IMR-90 (cell line): ENCODE measurements at regions of chr6 and their contacts with region 1.

Region 1: DNA sequence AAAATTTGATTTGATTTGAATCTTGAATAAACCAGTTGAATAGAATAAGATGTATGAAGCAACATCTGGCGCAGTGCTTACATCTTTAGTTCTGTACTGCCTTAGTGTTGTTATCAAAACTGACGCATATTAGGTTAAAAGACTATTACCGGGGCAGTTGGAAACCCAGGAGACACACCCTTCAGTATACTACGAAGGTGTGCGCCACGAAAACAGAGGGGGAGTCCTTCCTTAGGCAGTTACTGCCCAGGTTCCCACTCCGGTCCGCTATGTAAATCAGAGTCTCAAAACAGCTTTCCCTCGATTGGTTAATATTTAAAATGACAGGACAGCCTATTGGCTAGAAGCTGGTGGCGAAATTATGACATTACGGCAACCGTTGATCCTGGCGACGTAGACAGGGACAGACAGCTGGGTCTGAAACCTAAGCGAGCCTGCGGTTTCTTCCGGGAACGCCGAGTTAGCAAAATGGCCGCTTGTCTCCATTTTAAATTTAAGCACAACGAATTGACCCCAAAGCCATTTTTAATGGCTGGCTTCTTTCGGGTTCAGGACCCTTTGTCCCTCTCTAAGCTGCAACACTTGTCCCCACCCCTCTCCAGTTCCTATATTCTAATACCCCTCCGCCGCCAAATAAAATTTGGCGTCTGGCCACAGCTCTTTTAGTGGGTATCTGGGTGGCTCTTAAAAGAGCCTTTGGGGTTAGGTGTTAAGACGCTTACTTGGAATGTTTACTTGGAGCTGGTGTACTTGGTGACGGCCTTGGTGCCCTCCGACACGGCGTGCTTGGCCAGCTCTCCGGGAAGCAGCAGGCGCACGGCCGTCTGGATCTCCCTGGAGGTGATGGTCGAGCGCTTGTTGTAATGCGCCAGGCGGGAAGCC is 35.8 kb downstream of the HFE start:
- DNase-seq: peak; percentile 99
- ATAC-seq: peak; percentile 47
- H3K4me3 ChIP-seq: peak overlapping the region; percentile 54
- H3K27ac ChIP-seq: peak overlapping the region; percentile 89
- H3K4me1 ChIP-seq: peaks cover 5% of the 10 kb centered on the region
- H3K27me3 ChIP-seq: no peaks in the 10 kb centered on the region
- CTCF ChIP-seq: no peak
- POLR2A ChIP-seq: no peak; the same call in 1 of the 2 replicates
- RAD21 ChIP-seq: no peak

Region 2: DNA sequence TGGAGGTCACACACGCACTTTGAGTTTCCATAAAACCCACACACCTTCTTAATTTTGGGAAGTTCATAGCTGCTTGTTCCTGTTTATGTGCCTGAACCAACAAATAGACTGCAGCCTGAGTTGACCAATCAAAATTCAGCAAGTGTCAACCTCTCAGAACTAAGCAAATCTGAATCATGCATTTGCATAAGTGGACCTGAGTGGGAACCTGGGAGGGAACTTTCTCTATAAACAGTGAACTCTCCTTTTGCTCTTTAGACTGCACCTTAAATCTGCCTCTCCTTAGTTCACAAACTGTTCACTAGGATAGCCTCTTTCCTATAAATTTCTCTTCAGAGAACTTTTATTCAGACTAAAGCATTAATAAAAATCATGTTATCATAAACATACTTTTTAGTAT is 329.1 kb before region 1 on chr6:
- CTCF ChIA-PET with region 1: no interaction called
- POLR2A ChIA-PET with region 1: no interaction called
- dilution Hi-C with region 1: no loop called
- in situ Hi-C with region 1: no loop called
- intact Hi-C with region 1: no loop called
- DNase-seq: no peak
- ATAC-seq: no peak
- H3K4me3 ChIP-seq: no peak overlapping the region
- H3K27ac ChIP-seq: no peak overlapping the region
- H3K4me1 ChIP-seq: no peaks in the 10 kb centered on the region
- H3K27me3 ChIP-seq: no peaks in the 10 kb centered on the region
- CTCF ChIP-seq: no peak
- POLR2A ChIP-seq: no peak
- RAD21 ChIP-seq: no peak

Region 3: DNA sequence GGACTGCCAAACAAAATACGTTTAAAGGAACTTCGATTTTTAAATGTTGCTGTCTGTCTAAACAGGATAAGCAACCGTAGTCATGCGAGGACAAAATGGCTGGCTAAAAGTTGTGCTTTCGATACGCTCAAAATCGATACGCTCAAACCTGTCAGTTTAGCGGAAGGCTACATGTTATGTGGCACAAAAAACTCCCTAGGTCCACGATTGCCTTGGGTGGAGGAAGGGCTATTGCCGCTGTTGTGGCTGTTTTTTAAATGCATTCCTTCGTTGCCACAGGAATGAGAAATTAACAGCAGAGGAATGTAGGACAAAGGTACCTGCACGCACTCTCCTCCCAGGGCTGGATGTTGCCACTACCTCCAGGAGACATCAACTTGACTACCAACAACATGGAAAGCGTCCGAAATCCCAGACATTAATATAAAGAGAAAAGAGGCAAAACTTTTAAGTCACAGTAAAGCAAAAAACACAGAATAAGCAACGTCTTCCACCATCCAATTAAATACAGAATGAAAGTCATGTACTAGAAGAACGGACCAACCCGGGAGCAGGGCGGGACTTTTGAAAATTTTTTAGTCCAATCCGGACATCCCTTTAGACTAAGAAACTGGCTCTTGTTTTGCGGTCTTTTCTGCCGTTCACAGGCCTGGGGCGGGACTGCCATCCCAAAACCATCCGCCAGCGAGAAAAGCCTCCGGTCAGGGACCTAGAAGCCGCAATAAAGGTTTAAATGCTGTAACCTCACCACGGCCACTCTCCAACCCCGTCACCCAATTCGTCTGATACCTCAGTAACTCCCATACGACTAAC is 68.0 kb before region 1 on chr6:
- CTCF ChIA-PET with region 1: interaction called, 3 read pairs
- POLR2A ChIA-PET with region 1: no interaction called
- dilution Hi-C with region 1: no loop called
- in situ Hi-C with region 1: no loop called
- intact Hi-C with region 1: loop called (anchors 2 kb)
- DNase-seq: peak; percentile 96
- ATAC-seq: peak; percentile 77
- H3K4me3 ChIP-seq: peak overlapping the region; percentile 77
- H3K27ac ChIP-seq: peak overlapping the region; percentile 86
- H3K4me1 ChIP-seq: peaks cover 2% of the 10 kb centered on the region; the same call in 1 of the 2 replicates
- H3K27me3 ChIP-seq: no peaks in the 10 kb centered on the region
- CTCF ChIP-seq: peak; percentile 28; the same call in 1 of the 2 replicates
- POLR2A ChIP-seq: peak; percentile 92
- RAD21 ChIP-seq: peak; percentile 26; the same call in 1 of the 2 replicates

Region 4: DNA sequence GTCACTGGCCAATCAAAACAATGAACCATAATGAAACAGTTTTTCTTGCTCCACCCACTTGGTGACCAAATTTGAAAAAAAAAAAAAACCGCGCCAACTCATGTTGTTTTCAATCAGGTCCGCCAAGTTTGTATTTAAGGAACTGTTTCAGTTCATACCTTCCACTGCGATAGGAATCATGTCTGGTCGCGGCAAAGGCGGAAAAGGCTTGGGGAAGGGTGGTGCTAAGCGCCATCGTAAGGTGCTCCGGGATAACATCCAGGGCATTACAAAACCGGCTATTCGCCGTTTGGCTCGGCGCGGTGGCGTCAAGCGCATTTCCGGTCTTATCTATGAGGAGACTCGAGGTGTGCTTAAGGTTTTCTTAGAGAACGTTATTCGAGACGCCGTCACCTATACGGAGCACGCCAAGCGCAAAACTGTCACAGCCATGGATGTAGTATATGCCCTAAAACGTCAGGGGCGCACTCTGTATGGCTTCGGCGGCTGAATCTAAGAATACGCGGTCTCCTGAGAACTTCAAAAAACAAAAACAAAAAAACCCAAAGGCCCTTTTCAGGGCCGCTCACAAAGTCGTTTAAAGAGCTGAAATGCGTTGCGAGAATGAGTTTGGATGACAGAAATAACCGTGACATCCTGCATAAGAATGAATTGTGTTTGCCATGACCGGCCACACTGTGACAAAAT is 19.1 kb before region 1 on chr6:
- CTCF ChIA-PET with region 1: interaction called, 4 read pairs
- POLR2A ChIA-PET with region 1: interaction called, 44 read pairs
- dilution Hi-C with region 1: no loop called
- in situ Hi-C with region 1: no loop called
- intact Hi-C with region 1: loop called (anchors 1 kb)
- DNase-seq: peak; percentile 95
- ATAC-seq: peak; percentile 83
- H3K4me3 ChIP-seq: peak overlapping the region; percentile 45
- H3K27ac ChIP-seq: peak overlapping the region; percentile 52
- H3K4me1 ChIP-seq: peaks cover 5% of the 10 kb centered on the region; the same call in 1 of the 2 replicates
- H3K27me3 ChIP-seq: no peaks in the 10 kb centered on the region
- CTCF ChIP-seq: peak; percentile 39
- POLR2A ChIP-seq: peak; percentile 99
- RAD21 ChIP-seq: peak; percentile 44

Region 5: DNA sequence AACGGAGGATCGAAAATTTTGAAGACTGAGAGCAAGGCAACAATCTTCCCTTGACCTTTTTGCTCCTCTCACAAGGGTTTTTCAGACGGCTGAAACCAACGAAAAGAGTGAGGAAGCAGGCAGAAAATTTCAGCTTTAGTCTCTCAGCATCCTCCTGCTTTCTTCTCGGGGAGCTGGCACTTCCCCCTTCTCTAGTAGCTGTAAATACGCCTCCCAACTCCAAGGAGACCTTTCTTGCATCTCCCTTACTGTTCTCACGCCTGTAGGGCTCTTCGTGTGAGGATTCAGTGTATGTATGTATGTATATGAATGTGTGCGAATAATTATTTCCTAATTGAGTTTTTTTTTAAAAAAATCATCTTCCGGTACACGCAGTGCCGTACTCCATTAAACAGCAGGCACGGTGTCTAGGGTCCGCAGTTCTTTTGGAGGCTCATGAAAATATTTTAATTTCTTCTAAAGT is 49.5 kb after region 1 on chr6:
- CTCF ChIA-PET with region 1: no interaction called
- POLR2A ChIA-PET with region 1: interaction called, 7 read pairs
- dilution Hi-C with region 1: no loop called
- in situ Hi-C with region 1: no loop called
- intact Hi-C with region 1: loop called (anchors 1 kb)
- DNase-seq: peak; percentile 46
- ATAC-seq: peak; percentile 19
- H3K4me3 ChIP-seq: peak overlapping the region; percentile 90
- H3K27ac ChIP-seq: peak overlapping the region; percentile 76
- H3K4me1 ChIP-seq: peaks cover 1% of the 10 kb centered on the region; the same call in 1 of the 2 replicates
- H3K27me3 ChIP-seq: no peaks in the 10 kb centered on the region
- CTCF ChIP-seq: no peak
- POLR2A ChIP-seq: no peak
- RAD21 ChIP-seq: no peak

Region 6: GRCh38 chr6:26216356-26216885 is 93.4 kb after region 1 on chr6:
- CTCF ChIA-PET with region 1: no interaction called
- POLR2A ChIA-PET with region 1: interaction called, 36 read pairs
- dilution Hi-C with region 1: no loop called
- in situ Hi-C with region 1: no loop called
- intact Hi-C with region 1: no loop called
- DNase-seq: peak; percentile 99
- ATAC-seq: peak; percentile 81
- H3K4me3 ChIP-seq: peak overlapping the region; percentile 47
- H3K27ac ChIP-seq: peak overlapping the region; percentile 22
- H3K4me1 ChIP-seq: no peaks in the 10 kb centered on the region
- H3K27me3 ChIP-seq: no peaks in the 10 kb centered on the region
- CTCF ChIP-seq: no peak
- POLR2A ChIP-seq: peak; percentile 99
- RAD21 ChIP-seq: no peak

Region 7: DNA sequence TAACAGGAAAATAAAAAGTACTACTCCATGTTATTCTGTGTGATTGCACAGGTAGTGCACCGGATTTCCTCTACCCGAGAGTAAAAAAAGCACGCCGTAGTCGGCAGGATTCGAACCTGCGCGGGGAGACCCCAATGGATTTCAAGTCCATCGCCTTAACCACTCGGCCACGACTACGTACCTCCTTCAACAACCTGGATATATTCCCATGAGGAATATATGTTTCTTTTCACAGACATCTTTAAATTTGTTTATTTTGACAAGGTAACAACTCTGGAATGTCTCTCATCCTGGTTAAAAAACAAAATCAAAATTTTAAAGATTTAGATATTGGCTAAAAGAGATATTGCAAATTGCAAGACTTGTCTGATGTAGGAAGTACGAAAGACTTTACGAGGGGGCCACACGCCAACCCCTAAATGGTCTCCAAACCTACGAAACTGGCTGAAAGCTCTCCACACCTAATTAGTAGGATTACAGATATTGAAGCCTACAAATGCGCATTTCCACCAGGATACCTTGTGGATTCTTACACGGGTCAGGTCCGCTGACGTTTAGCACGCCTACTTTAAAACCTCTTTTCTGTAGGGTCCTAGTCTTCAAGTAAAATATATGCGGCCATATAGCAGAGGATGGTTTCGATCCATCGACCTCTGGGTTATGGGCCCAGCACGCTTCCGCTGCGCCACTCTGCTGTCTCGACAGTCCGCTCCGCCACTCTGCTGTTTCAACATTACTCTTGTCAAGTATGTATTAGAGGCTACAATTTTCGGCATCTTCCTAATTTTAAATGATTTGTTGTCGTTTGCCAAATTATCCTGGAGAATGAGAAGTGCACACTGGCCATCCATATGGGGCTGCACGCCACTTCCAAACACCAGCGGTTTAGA is 189.7 kb after region 1 on chr6:
- CTCF ChIA-PET with region 1: no interaction called
- POLR2A ChIA-PET with region 1: no interaction called
- dilution Hi-C with region 1: no loop called
- in situ Hi-C with region 1: no loop called
- intact Hi-C with region 1: no loop called
- DNase-seq: peak; percentile 95
- ATAC-seq: peak; percentile 83
- H3K4me3 ChIP-seq: peak overlapping the region; percentile 75
- H3K27ac ChIP-seq: no peak overlapping the region
- H3K4me1 ChIP-seq: peaks cover 7% of the 10 kb centered on the region; the same call in 1 of the 2 replicates
- H3K27me3 ChIP-seq: no peaks in the 10 kb centered on the region
- CTCF ChIP-seq: no peak
- POLR2A ChIP-seq: no peak
- RAD21 ChIP-seq: no peak